Activated T-helper 1 cell treated with anti-CD3 and anti-CD28 coated beads, Interleukin-12 subunit alpha, Interleukin-12 subunit beta, Interleukin-2, Interleukin-4 antibody, amounts not matched to agents 30 ng/mL and 10 ng/mL and 1 ng/mL, durations not matched to agents 14 hours and 24 hours and 36 hours (primary cell): ENCODE measurements at regions of chr10 and their contacts with region 1.

Region 1: DNA sequence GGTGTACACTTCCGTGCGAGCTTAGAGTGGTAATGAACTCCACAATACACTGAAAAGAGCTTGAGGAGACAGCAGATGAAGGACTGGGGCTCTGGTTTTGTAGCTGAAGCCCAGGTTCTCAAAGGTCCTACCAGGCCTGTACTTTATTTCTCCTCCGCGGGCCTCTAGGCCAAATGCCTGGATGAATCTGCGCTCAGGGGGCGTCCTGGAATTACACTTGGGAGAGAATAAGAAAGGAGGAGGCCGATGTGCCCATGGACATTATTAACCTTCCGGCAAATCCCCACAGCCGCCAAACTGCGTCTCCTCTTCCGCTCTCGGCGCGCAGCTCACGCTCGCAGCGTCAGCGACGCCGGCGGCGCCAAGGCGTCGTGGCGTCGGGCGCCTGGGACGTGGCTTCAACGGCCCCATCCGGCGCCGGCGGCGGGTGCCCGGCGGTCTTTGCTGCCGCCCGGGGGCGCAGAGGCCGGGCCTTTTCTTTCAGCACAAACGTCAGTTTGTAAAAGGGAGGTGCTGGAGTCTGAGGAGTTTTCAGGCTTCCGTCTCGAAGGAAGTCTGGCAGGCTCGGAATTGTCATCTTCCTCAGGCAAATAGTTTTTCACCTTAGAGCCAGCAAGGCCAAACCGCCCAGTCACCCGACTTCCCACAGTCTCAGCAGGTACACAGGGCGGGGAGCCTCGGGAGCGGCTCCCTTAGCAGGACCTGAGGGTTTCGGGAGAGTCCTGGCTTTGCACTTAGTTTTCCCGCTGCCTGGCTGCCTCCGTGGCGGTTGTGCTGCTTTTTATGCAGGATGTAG is at the start of gene CCDC7:
- DNase-seq: peak; percentile 83
- H3K4me3 Mint-ChIP-seq: peak within 1 kb of the TSS; percentile 98
- H3K27ac Mint-ChIP-seq: peak within 1 kb of the TSS; percentile 96
- H3K4me1 Mint-ChIP-seq: peaks cover 9% of the 10 kb centered on the region
- H3K27me3 Mint-ChIP-seq: peaks cover 3% of the 10 kb centered on the region
- total RNA-seq, gene CCDC7: 9.0 and 10.2 TPM in 2 replicates

Region 2: DNA sequence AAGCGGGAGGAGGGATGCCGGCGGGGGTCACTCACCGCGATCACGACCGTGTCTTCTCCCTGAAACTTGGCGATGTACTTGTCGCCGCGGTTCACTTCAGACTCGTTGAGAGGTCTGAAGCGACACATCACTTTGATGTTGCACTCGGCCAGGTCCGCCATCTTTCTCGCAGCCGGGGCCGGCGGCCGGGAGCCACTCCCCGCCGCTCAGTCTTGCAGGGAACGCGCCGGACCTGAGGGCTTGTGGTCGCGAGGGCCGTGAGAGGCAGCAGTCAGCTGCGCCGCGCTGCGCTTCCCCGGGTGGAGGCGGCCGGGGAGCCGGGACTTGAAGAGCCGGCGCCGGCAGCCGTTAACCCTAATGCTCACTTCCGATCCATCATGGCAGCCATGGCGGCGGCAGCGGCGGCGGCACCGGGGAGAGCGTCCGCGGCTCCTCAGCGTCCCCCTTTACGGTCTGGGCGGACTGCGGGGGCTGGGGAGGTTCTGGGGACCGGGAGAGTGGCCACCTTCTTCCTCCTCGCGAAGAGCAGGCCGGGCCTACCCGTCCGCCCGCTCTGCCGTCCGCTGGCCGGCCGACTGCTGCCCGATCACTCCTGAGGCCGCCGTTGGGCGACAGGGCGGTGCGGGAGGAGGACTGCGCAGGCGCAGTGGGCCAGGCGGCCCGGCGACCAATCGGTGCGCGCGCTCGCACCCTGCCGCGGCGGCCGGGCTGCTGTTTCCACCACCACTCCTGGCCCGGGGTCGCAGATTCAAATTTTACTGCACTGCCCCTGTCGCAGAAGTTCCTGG is 389.9 kb before region 1 on chr10 and contains the start of gene KIF5B:
- intact Hi-C with region 1: loop called (anchors 10 kb)
- DNase-seq: peak; percentile 85
- H3K4me3 Mint-ChIP-seq: peak within 1 kb of the TSS; percentile 94
- H3K27ac Mint-ChIP-seq: peak within 1 kb of the TSS; percentile 92
- H3K4me1 Mint-ChIP-seq: peaks cover 41% of the 10 kb centered on the region
- H3K27me3 Mint-ChIP-seq: no peaks in the 10 kb centered on the region
- total RNA-seq, gene KIF5B: 80.7 and 83.4 TPM in 2 replicates

Region 3: DNA sequence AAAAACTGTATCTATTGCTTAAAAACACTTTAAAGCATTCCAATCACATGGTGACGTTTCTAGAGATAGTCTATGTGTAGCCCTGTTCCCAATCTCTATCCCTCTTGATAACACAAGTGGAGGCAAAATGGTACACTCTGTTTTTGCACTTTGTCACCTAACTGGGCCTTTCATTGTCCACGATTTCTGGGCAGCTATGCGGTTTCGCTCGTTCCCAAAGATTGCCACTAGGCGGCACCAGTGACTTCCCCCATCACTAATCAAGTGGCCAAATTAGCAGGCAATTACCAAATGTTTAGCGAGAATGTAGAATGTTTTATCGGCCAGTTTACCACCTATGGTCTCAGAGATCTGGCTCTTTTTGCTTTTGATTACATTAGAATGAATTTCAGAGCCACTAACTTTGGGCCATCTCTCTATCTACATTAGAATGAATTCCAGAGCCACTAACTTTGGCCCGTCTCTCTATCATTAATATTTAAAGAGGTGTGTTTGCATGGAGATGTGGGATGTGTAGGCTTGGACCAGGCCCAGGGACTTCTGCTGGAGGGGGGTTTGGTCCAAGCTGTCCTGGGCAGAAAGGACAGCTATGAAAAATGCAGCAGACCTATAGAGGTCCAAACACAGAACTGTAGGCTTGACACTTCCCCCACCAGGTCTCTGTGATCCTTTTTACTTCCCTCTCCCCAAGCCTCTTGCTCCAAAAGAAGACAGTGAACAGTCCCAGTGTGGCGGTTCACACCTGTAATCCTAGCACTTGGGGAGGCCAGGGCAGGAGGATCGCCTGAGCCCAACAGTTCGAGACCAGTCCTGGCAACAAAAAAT is 189.1 kb before region 1 on chr10:
- intact Hi-C with region 1: loop called (anchors 5 kb)
- DNase-seq: peak; percentile 48
- H3K4me3 Mint-ChIP-seq: no peak overlapping the region
- H3K27ac Mint-ChIP-seq: peak overlapping the region; percentile 66
- H3K4me1 Mint-ChIP-seq: peaks cover 17% of the 10 kb centered on the region
- H3K27me3 Mint-ChIP-seq: no peaks in the 10 kb centered on the region

Region 4: GRCh38 chr10:32958085-32959005 is 512.4 kb after region 1 on chr10 and contains the start of gene ITGB1:
- intact Hi-C with region 1: loop called (anchors 5 kb)
- DNase-seq: peak; percentile 81
- H3K4me3 Mint-ChIP-seq: peak within 1 kb of the TSS; percentile 86
- H3K27ac Mint-ChIP-seq: peak within 1 kb of the TSS; percentile 93
- H3K4me1 Mint-ChIP-seq: peaks cover 35% of the 10 kb centered on the region
- H3K27me3 Mint-ChIP-seq: peaks cover 12% of the 10 kb centered on the region
- total RNA-seq, gene ITGB1: 51.4 and 61.4 TPM in 2 replicates